GM10248 (cell line): ENCODE measurements at regions of chr14 and their contacts with region 1.

Region 1: GRCh38 chr14:69242311-69243224 is 17.4 kb upstream of the GALNT16 start:
- DNase-seq: peak; percentile 77
- CTCF ChIP-seq: peak; percentile 73

Region 2: DNA sequence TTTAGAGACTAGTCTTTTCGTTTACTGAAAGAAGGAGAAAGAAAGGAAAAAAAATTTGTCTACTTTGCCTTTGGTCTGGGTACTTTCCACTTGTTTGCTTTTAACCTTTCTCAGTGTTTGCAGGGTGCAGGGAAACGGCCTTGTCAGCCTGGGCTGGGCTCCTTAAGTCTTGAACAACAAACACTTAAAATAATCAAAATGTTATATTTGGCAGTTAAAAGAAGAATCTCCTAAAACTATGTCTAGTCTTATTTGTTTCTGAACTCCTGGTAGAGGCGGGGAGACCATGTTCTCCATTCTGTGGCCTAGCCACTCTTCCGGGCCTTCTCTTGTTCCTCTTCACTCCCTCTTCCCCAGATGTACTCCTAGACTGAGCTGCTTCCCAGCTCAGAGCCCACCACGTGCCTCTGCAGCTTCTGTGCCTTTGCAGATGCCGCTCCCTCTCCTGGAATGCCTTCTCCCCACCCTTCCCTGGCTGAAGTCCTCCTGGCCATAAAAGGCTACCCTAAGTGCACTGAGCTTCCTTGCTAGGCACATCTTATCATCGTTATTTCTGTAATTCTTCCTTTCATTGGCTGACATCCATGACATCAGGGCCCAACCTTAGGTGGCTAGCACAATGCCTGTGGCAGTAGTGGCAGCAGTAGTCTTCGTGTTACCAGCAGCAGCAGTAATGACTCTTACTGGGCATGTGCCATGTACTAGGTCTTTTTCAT is 882.6 kb before region 1 on chr14:
- CTCF ChIA-PET with region 1: no interaction called
- POLR2A ChIA-PET with region 1: no interaction called
- DNase-seq: no peak
- CTCF ChIP-seq: no peak

Region 3: DNA sequence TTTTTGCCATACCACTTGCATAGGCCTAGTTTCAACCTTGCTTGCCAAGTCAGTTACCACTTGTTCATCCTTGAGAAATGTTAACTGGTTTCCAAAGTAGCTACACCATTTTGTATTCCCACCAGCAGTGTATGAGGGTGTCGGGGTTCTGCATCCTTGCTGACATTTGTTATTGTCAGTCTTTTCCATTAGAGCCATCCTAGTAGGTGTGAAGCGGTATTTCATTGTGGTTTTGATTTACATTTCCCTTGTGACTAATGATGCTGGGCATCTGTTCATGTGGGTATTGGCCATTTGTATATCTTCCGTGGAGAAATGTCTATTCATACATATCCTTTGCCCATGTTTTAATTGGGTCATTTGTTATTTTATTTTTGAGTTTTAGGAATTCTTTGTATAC is 10.2 kb before region 1 on chr14:
- CTCF ChIA-PET with region 1: interaction called, 22 read pairs
- POLR2A ChIA-PET with region 1: no interaction called
- DNase-seq: no peak
- CTCF ChIP-seq: no peak

Region 4: DNA sequence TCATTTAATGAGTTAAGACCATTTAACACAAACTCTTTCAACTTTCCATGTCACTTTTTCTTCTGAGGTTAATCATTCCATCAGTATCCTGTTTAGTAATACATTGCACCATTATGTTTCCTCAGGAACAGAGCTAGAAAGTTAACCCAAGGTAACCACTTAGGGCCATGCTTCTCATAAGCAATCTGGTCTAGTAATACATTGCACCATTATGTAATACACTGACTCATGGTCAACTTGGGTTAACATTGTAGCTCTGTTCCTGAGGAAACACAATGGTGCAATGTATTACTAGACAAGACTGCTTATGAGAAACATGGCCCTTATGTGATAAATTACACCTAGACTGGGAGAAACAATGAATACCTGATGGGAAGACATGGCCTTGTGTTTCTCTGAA is 133.9 kb after region 1 on chr14:
- CTCF ChIA-PET with region 1: no interaction called
- POLR2A ChIA-PET with region 1: no interaction called
- DNase-seq: no peak
- CTCF ChIP-seq: no peak

Region 5: DNA sequence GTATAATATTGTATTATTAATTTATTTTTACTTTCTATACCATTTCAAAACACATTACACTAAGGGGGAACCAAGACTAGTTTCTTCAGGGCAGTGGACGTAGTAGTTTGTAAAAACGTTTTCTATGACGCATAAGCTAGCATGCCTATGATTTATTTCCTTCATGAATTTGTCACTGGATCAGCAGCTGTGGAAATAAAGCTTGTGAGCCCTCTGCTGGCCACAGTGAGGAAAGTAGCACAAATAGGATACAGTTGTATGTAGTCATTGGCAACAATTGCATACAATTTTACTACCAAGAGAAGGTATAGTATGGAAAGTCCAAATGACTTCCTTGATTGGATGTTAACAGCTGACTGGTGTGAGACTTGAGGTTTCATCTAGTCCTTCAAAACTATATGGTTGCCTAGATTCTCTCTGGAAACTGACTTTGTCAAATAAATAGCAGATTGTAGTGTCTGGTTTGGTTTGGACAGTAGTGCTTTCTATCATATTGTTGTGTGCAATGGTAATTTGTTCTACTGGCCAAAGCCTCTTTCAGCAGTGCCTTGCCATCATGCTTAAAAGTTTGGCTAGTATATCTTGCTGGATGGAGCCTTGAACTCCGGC is 217.6 kb after region 1 on chr14:
- CTCF ChIA-PET with region 1: interaction called, 80 read pairs
- POLR2A ChIA-PET with region 1: no interaction called
- DNase-seq: peak; percentile 68
- CTCF ChIP-seq: peak; percentile 87

Region 6: GRCh38 chr14:69475194-69475818 is 232.7 kb after region 1 on chr14:
- CTCF ChIA-PET with region 1: interaction called, 12 read pairs
- POLR2A ChIA-PET with region 1: no interaction called
- DNase-seq: peak; percentile 47
- CTCF ChIP-seq: peak; percentile 15

Region 7: DNA sequence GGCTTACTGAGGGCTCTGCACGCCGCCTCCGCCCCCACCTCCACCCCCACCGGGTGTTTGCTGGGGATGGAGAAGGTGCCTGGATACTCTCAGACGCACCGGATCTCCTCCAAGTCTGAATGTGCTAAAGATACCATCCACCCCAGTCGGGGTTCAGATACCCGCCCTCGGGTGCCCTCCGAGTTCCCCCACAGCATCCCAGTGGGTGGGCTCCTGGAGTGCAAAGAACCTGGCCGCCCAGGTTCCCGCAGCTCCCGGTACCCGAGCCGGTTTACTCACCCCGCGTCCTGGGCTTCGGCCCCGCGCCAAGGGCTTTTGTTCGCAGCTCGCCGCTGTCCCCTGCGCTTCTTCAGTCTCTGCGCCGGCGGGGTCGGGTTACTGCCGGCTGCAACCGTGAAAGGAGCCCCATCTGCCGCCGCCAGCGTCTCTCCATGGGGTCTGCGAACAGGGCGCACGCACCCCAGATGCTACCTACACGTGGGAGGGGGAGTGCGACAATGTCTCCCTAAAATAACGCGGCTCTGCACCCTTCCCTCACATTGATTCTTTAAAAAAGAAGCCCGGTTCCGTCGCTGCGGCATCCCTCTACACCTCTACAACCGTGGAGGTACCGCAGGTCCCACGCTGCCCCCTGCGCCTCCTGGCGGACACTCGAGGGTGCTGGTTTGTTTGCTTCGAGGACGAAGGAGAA is 331.8 kb after region 1 on chr14 and contains the start of gene CCDC177:
- CTCF ChIA-PET with region 1: interaction called, 41 read pairs
- POLR2A ChIA-PET with region 1: no interaction called
- DNase-seq: peak; percentile 83
- CTCF ChIP-seq: peak; percentile 90